Activated CD4-positive, alpha-beta memory T cell treated with anti-CD3 and anti-CD28 coated beads for 36 hours (primary cell): ENCODE measurements at regions of chr6 and their contacts with region 1.

Region 1: DNA sequence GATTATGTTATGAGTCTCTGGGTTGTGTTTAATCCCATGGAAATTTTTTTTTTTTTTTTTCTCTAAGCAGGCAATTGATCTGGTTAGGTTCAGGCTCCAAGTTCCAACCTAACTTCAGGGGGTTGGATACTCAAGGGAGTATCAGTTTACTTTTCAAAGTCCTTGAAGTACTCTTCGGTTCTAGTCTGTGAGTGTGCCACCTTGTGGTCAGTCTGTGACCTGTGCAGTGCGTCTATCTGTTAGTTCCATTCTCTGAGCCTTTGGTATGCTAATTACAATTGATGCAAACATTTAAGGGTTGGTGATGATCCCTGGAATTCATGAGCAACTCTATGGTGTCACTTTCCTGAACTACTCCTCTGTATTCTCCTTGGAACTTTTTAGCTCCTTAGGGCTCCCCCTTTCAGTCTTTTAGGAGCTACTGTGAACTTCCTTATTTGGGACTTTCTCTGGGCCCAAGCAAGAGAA is 342.0 kb downstream of the SOX4 start:
- DNase-seq: peak; percentile 17
- H3K4me3 Mint-ChIP-seq: no peak overlapping the region
- H3K27ac Mint-ChIP-seq: no peak overlapping the region
- H3K4me1 Mint-ChIP-seq: no peaks in the 10 kb centered on the region
- H3K27me3 Mint-ChIP-seq: no peaks in the 10 kb centered on the region

Region 2: DNA sequence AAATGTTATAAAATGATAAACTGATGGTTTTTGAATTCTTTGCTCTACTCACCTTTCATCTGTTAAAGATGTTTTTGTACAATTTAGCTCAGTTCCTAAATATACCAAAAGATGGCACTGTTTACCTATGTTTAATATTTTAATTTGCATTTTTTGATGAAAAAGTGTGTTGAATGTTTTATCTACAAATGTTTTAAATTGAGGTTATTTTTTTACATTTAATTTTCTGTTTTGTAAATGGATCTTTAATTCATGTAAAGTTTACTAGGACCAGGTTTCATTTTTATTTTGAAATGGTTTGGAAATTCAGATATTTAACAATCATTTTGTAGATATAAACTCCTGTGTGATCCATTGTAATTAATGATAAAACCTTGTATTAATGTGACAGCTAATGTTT is 1371.3 kb before region 1 on chr6:
- CTCF ChIA-PET with region 1: no interaction called
- POLR2A ChIA-PET with region 1: no interaction called
- intact Hi-C with region 1: loop called (anchors 10 kb)
- DNase-seq: no peak
- H3K4me3 Mint-ChIP-seq: no peak overlapping the region
- H3K27ac Mint-ChIP-seq: no peak overlapping the region
- H3K4me1 Mint-ChIP-seq: peaks cover 9% of the 10 kb centered on the region
- H3K27me3 Mint-ChIP-seq: no peaks in the 10 kb centered on the region